ENCODE measurements at regions of chrX and their contacts with region 1.

Region 1: DNA sequence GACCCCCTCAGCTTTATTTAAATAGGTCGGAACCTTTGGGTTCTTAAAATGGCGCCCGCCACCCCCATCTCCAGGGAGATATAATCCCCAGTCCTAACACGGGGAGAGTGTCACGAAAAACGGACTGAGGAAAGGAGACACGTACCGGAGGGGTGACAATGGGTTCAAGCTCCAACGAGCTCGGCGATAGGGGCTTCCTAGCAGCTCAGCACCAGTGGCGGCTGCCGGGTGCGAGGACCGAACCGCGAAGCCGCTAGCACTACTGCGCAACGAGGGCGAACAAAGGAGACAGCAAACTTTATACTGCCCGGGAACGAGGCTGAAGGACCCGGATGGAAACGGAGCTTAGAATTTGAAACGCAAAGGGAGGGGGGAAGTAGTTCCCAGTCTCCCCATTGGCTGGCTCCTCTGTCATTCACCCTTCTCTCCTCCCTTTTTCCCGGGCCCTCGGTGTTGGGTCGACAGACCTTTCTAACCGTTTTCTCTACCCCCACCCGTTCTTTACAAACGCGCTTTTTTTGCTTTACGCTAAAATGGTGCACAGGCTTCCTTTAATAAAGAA is at the start of gene RBMX:
- H3K4me3 Mint-ChIP-seq: peak within 1 kb of the TSS; percentile 89
- H3K27ac Mint-ChIP-seq: peak within 1 kb of the TSS; percentile 96
- H3K4me1 Mint-ChIP-seq: peaks cover 9% of the 10 kb centered on the region
- H3K27me3 Mint-ChIP-seq: no peaks in the 10 kb centered on the region

Region 2: DNA sequence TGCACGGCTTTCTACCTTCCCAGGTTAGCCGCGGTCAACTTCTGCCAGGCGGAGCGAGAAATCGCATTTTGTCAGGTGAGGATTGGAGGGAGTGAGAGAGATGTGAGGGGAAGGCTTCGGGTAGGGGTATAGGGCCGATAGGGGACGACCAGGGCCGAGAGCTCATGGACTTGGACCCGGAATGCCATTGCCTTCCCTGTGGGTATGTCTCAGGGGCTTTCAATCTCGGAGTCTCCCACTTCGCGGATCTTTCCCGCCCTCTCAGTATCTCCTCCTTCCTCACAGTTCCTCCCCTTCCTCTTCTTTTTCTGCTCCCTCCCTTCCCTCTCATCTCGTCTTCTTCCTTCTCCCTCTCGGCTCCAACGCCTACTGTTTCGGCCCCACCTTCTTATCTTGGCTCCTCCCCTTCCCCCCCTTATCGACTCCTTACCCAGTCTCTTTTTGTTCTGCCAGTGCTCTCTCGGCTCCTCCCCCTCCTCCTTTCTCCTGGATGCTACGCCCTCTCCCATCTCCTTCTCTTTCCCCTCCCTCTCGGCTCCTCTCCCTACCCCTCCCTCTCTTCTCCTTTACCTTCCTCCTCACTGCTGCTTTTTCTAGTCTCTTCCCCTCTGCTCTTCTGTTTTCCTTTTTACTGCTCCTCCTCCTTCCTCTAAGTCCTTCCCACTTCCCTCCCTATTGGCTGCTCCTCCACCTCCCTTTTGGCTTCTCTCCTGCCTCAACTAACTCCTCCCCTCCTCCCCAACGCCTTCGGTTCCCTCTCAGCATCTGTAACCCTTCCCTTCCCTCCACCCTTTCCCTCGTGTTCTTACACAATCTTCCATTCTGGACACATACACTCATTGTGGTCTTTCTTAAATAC is 29.4 kb after region 1 on chrX:
- intact Hi-C with region 1: loop called (anchors 1 kb)
- H3K4me3 Mint-ChIP-seq: peak overlapping the region; percentile 92
- H3K27ac Mint-ChIP-seq: peak overlapping the region; percentile 86
- H3K4me1 Mint-ChIP-seq: peaks cover 17% of the 10 kb centered on the region
- H3K27me3 Mint-ChIP-seq: no peaks in the 10 kb centered on the region

Region 3: DNA sequence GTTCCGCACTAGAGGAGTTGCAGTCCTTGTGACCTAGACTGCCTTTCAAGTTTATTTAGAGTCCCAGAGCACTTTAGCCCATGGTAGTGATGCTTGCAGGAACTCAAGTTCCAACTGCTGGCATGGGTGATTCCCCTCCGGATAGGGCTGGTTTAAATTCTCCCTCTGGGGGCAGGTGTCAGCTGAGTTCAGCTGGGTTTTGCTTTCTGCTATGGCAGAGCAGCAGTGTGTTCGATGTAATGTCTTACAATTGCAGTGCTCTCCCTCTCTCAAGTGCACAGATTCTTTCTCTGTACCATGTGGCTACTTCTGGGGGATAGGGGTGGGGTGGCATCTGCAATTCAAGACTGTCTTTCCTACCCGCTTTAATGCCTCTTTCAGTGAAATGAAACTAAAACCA is 520.6 kb after region 1 on chrX:
- intact Hi-C with region 1: no loop called
- H3K4me3 Mint-ChIP-seq: no peak overlapping the region
- H3K27ac Mint-ChIP-seq: no peak overlapping the region
- H3K4me1 Mint-ChIP-seq: no peaks in the 10 kb centered on the region
- H3K27me3 Mint-ChIP-seq: no peaks in the 10 kb centered on the region